ENCODE measurements at regions of chr17 and their contacts with region 1.

Region 1: GRCh38 chr17:9512323-9513168 is 63.1 kb downstream of the STX8 start:
- DNase-seq: no peak
- ATAC-seq: no peak
- H3K4me3 ChIP-seq: no peak overlapping the region
- H3K27ac ChIP-seq: no peak overlapping the region
- H3K4me1 ChIP-seq: peaks cover 0 to 3% (median 0%) of the 10 kb centered on the region in 9 donors
- H3K27me3 ChIP-seq: no peaks in the 10 kb centered on the region
- CTCF ChIP-seq: no peak

Region 2: DNA sequence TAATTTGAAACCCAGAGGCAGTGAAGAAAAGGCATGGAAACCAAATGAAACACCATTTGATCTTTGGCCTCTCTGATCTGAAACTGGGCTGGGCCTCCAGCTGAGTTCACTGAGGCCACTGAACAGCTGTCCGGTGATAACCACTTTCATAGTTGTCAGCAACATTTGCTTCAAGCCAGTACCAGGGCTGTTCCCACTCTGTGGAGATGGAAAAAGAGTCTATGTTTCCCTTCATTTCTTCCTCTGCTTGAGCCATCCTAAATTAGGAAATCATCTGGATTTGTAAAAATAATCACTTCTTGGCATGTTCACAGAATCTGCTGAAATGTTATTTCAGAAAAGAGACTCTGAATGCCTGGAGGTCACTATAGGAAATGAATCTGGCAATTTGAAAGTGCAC is 56.2 kb before region 1 on chr17:
- intact Hi-C with region 1: loop called in 1 of 10 experiments (anchors 10 kb)
- DNase-seq: peak in 1 of 2 donors; percentile 22
- ATAC-seq: peak in 7 of 8 donors; percentile 74 to 91 (median 82)
- H3K4me3 ChIP-seq: no peak overlapping the region
- H3K27ac ChIP-seq: no peak overlapping the region
- H3K4me1 ChIP-seq: peaks cover 0 to 10% (median 0%) of the 10 kb centered on the region in 9 donors
- H3K27me3 ChIP-seq: no peaks in the 10 kb centered on the region
- CTCF ChIP-seq: no peak